Esophagus muscularis mucosa (tissue), 4 donors: ENCODE measurements at regions of chr2 and their contacts with region 1.

Region 1: DNA sequence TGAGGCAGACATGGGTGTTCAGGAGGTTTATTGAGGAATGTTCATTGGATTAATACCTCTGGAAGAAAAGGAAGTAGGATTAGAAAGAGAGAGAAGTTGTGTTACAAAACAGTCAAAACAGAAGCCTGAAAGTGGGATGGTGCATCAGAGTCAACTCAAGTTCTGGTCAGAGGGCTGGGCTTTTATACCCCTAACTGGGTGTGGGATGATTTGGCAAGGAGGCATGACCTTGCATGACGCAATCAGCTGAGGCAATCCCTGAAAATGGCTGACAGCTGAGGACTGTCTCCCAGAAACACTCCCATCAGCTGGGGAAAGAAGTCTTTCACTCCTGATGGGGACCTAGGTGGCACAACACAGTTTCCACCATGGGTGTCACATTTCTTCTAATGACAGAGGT is 818.2 kb downstream of the SATB2 start:
- DNase-seq: no peak
- H3K4me3 ChIP-seq: no peak overlapping the region
- H3K27ac ChIP-seq: no peak overlapping the region
- H3K4me1 ChIP-seq: no peaks in the 10 kb centered on the region
- H3K27me3 ChIP-seq: no peaks in the 10 kb centered on the region
- CTCF ChIP-seq: no peak
- EP300 ChIP-seq: no peak
- POLR2A ChIP-seq: no peak

Region 2: DNA sequence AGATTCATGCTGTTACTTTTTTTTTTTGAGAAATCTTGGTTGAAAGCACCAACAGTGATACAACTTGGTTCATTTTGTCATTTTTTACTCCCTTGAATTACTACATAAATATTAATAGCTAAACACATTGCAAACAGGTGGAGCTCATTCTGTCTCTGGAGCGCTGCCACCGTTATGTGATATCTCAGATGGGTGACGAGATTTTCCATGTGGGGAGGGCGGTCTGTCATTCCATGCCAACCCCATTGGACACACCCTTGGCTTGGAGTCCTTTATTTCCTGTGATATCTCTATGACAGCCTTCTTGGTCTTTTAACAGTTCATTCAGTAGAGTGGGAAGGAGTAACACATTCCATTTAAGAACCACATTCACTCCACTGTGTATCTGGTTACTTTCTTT is 23.3 kb after region 1 on chr2:
- intact Hi-C with region 1: loop called (anchors 1 kb)
- DNase-seq: no peak
- H3K4me3 ChIP-seq: no peak overlapping the region
- H3K27ac ChIP-seq: no peak overlapping the region
- H3K4me1 ChIP-seq: no peaks in the 10 kb centered on the region
- H3K27me3 ChIP-seq: no peaks in the 10 kb centered on the region
- CTCF ChIP-seq: no peak
- EP300 ChIP-seq: no peak
- POLR2A ChIP-seq: no peak